Activated CD4-positive, alpha-beta T cell treated with anti-CD3 and anti-CD28 coated beads for 36 hours (primary cell): ENCODE measurements at regions of chr15 and their contacts with region 1.

Region 1: GRCh38 chr15:63833021-63833696 is 589 bp downstream of the HERC1 start:
- DNase-seq: peak; percentile 64
- ATAC-seq: peak; percentile 50
- H3K4me3 Mint-ChIP-seq: peak overlapping the region; percentile 87
- H3K27ac Mint-ChIP-seq: peak overlapping the region; percentile 91
- H3K4me1 Mint-ChIP-seq: peaks cover 50% of the 10 kb centered on the region
- H3K27me3 Mint-ChIP-seq: no peaks in the 10 kb centered on the region

Region 2: GRCh38 chr15:62940093-62940754 is 892.9 kb before region 1 on chr15:
- CTCF ChIA-PET with region 1: no interaction called
- POLR2A ChIA-PET with region 1: interaction called, 10 read pairs
- intact Hi-C with region 1: no loop called
- DNase-seq: no peak
- ATAC-seq: no peak
- H3K4me3 Mint-ChIP-seq: no peak overlapping the region
- H3K27ac Mint-ChIP-seq: no peak overlapping the region
- H3K4me1 Mint-ChIP-seq: peaks cover 4% of the 10 kb centered on the region
- H3K27me3 Mint-ChIP-seq: peaks cover 26% of the 10 kb centered on the region

Region 3: DNA sequence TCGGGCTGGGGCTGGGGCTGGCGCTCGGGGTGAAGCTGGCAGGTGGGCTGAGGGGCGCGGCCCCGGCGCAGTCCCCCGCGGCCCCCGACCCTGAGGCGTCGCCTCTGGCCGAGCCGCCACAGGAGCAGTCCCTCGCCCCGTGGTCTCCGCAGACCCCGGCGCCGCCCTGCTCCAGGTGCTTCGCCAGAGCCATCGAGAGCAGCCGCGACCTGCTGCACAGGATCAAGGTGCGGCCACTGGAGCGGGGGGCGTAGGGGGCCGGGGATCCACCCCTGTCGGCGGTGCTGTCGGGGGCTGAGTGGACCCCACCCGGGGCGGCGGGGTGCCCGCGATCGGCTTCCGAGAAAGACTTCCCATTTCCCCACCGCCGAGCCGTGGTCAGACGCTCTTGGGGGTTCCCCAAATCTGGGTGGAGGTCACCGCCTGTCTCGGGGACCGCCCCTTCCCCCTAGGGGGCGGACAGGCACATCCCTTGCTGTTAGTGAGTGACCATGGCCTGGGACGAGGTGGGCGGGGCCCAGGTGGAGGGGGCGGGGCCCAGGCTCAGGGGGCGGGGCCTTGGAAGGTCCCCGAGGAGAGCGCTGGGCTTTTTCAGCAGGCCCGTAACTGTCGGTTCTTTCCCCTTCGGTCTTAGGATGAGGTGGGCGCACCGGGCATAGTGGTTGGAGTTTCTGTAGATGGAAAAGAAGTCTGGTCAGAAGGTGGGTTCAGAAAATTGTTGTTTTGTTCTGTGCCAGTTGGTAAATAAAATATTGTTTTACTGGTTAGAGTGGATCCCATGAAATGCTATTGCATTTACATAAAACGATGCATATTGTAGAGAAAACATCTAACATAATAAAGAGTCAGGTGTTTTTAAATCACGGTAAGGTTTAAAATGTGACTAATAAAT is 710.9 kb before region 1 on chr15:
- CTCF ChIA-PET with region 1: no interaction called
- POLR2A ChIA-PET with region 1: no interaction called
- intact Hi-C with region 1: loop called in 1 of 2 experiments (anchors 5 kb)
- DNase-seq: peak; percentile 91
- ATAC-seq: peak; percentile 89
- H3K4me3 Mint-ChIP-seq: peak overlapping the region; percentile 92
- H3K27ac Mint-ChIP-seq: peak overlapping the region; percentile 88
- H3K4me1 Mint-ChIP-seq: peaks cover 12% of the 10 kb centered on the region
- H3K27me3 Mint-ChIP-seq: no peaks in the 10 kb centered on the region

Region 4: GRCh38 chr15:63600616-63601025 is 232.5 kb before region 1 on chr15:
- CTCF ChIA-PET with region 1: no interaction called
- POLR2A ChIA-PET with region 1: no interaction called
- intact Hi-C with region 1: loop called in 1 of 2 experiments (anchors 2 kb)
- DNase-seq: peak; percentile 95
- ATAC-seq: peak; percentile 74
- H3K4me3 Mint-ChIP-seq: peak overlapping the region; percentile 88
- H3K27ac Mint-ChIP-seq: peak overlapping the region; percentile 96
- H3K4me1 Mint-ChIP-seq: peaks cover 54% of the 10 kb centered on the region
- H3K27me3 Mint-ChIP-seq: no peaks in the 10 kb centered on the region

Region 5: DNA sequence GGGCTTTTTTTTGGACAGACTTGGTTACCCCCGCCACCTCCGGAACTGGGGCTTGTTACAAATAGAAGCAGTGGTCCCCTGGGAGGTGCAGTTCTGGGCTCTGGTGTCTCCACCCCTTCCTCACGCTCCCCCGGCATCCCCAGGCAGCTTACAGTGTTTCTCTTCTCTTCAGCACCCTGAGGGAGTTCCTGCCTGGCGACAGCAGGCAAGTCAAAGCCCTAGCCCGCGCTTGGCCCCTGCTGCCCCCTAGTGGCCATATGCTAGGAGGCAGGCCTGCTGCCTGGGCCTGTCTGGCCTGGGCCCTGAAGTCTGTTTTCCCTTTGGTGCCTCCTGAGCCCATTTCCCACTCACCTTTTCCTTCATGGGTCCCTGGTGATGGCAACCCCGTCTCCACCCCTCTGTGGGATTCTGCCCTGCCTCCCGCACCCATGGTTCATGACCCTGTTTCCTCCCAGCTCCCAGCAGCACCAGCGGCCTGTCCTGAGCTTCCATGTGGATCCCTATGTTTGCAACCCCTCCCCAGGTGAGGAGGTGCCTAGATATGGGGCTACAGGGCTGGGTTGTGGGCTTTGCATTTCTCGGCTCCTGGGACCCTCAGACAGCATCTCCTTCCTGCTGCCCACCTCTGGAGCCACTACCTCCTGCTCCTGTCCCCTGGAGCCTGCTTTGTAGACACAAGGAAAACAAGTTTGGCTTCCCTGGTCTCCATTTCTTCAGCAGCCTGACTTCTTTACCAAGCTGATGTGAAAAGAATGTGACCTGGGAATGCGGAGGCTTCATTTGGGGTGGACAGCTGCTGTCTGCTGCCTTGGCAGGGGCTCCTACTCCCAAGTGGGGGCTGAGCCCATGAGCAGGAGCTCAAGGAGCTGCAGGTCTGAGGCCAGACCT is 320.6 kb after region 1 on chr15:
- CTCF ChIA-PET with region 1: no interaction called
- POLR2A ChIA-PET with region 1: no interaction called
- intact Hi-C with region 1: loop called in 1 of 2 experiments (anchors 5 kb)
- DNase-seq: peak; percentile 96
- ATAC-seq: peak; percentile 91
- H3K4me3 Mint-ChIP-seq: no peak overlapping the region
- H3K27ac Mint-ChIP-seq: no peak overlapping the region
- H3K4me1 Mint-ChIP-seq: peaks cover 23% of the 10 kb centered on the region
- H3K27me3 Mint-ChIP-seq: peaks cover 13% of the 10 kb centered on the region

Region 6: DNA sequence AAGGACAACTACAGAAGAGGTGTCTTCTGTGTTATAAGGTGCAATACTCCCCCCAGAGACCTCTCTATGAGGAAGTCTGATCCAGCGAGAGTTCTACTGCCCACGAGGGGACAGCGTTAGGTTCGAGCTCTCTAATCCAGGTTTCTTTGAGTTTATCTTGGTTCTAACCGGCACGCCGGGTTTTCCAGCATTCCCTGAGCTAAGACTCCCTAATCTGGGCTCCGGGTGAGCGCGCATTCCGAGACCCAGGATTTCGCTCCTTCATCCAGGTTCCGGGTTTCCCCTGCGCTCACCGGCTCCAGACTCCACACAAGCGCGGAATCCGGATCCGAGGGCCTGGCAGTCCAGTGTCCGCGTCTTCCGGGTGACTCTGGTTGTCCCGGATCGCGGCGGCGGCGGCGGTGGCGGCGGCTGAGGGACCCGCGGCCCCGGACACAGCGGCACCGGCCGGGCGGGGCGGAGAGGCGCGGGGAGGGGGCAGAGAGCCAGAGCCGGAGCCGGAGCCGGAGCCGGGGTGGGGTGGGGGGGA is 627.1 kb after region 1 on chr15 and contains the start of gene ZNF609:
- CTCF ChIA-PET with region 1: no interaction called
- POLR2A ChIA-PET with region 1: no interaction called
- intact Hi-C with region 1: no loop called
- DNase-seq: peak; percentile 94
- ATAC-seq: peak; percentile 54
- H3K4me3 Mint-ChIP-seq: peak within 1 kb of the TSS; percentile 83
- H3K27ac Mint-ChIP-seq: peak within 1 kb of the TSS; percentile 92
- H3K4me1 Mint-ChIP-seq: peaks cover 80% of the 10 kb centered on the region
- H3K27me3 Mint-ChIP-seq: no peaks in the 10 kb centered on the region
- total RNA-seq, gene ZNF609: 39.8 to 44.5 TPM